Ascending aorta (tissue), 2 donors: ENCODE measurements at regions of chrX and their contacts with region 1.

Region 1: DNA sequence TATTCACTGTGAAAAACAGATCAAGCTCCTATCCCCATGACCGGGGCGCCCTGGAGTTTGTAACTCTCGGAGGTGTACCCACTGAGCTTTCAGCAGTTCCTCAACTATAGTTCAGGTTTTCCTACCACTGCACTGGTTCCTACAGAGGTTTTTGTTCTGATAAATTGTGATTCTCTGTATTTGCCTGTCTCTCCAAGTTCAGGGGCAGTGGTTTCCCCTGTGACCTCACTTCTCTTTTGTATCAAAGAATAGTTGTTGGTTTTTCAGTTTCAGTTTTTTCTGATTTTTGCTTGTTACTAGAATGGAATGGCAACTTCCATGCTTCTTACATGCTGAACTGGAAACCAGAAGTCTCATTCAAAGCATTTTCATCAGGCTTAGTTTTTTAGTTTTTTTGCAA is 56.8 kb upstream of the PLS3 start:
- DNase-seq: no peak
- H3K4me3 ChIP-seq: no peak overlapping the region
- H3K27ac ChIP-seq: peak overlapping the region; percentile 41 to 55
- H3K4me1 ChIP-seq: peaks cover 0 to 6% of the 10 kb centered on the region in 2 donors
- H3K27me3 ChIP-seq: no peaks in the 10 kb centered on the region
- CTCF ChIP-seq: no peak

Region 2: DNA sequence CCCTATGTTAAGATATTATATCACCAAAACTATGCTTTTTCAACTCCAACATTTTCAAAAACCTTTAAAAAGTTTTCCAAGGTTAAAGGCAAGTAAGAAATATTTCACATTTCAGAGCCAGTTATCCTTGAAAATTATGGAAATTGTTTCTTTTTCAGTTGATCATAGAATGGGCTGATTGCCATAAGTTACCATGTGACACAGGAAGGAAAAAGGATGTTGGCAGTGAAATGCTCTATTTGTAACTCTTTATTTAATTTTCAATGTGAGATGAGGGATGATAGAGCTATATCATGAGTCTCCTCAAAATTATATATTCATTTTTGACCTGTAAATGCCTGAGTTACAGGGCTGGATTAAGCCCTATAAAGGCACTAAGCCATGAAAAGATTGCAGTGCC is 36.2 kb before region 1 on chrX:
- intact Hi-C with region 1: loop called (anchors 5 kb)
- DNase-seq: no peak
- H3K4me3 ChIP-seq: no peak overlapping the region
- H3K27ac ChIP-seq: no peak overlapping the region
- H3K4me1 ChIP-seq: no peaks in the 10 kb centered on the region
- H3K27me3 ChIP-seq: no peaks in the 10 kb centered on the region
- CTCF ChIP-seq: no peak

Region 3: GRCh38 chrX:115665122-115665521 is 161.0 kb after region 1 on chrX:
- intact Hi-C with region 1: no loop called
- DNase-seq: no peak
- H3K4me3 ChIP-seq: no peak overlapping the region
- H3K27ac ChIP-seq: no peak overlapping the region
- H3K4me1 ChIP-seq: no peaks in the 10 kb centered on the region
- H3K27me3 ChIP-seq: no peaks in the 10 kb centered on the region
- CTCF ChIP-seq: no peak